Posterior cingulate gyrus (tissue), 11 donors: ENCODE measurements at regions of chr2 and their contacts with region 1.

Region 1: GRCh38 chr2:218995972-218996711 is 2.9 kb upstream of the CRYBA2 start:
- DNase-seq: peak; percentile 68 to 97 (median 88)

Region 2: DNA sequence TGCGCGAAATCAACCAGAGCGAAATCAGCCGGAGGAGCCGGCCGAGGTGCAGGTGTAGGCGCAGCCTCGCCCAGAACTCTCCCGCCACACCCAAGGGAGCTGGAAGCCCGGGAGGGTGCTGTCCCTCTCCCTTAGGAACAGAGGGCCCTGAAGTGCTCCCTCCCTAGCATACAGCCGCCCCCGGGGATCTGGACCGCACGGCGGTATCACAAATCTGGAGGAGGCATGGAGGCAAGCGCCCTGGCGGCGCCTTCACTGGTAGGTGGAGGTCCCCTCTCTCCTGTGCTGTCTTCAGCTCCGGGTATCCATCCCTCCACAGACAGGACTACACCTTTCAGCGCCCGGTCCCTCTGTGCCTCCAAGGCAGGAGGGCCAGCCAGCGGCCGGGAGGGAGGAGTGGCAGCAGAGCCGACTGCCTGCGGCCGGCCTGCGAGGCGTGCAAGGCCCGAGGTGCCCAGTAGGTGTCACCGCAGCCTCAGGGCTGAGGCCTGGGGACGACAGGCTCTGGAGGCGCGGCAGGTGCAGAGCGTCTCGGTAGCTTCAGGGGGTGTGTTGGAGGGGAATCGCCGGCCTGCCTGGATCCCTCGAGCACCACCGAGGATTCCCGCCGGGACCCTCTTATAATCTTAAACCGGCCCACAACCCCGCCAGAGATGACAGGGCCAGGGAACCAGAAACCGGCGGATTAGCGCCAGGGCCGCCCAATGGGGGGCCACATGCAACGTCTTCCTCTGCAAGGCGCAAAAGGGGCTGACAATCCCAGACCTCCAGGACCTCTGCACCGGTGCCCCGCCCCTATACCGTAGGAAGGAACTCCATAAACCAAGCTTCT is 61.8 kb after region 1 on chr2:
- intact Hi-C with region 1: loop called (anchors 10 kb)
- DNase-seq: peak; percentile 74 to 97 (median 79)

Region 3: DNA sequence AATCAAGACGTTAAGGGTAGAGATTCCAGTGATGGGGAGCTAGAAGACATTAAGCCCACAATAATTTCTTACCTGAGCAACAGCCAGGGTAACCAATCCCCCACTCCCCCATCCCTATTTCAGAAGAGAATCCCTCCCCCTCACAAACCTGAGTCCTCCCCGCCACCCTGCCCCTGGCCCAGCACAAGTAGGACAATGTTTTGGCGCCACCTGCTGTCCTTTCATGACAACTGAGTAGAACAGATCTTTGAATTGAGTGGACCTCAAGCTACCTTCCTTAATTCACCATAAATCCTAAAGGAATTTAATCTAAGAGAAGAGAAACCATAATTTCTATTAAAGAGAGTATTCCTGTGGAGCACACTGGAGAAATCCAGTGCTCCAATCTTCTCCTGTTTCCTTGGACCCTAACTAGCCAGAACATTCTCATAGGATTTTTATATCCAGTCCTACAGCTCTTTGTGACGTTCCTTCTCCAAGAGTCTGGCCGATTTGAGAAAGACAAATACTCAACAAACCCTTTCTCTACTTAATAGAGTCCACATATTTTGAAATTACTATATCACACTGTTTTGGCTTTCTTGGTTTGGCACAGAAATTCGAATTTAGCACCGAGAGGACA is 123.4 kb after region 1 on chr2:
- intact Hi-C with region 1: loop called (anchors 1 kb)
- DNase-seq: peak; percentile 18 to 93 (median 74)

Region 4: DNA sequence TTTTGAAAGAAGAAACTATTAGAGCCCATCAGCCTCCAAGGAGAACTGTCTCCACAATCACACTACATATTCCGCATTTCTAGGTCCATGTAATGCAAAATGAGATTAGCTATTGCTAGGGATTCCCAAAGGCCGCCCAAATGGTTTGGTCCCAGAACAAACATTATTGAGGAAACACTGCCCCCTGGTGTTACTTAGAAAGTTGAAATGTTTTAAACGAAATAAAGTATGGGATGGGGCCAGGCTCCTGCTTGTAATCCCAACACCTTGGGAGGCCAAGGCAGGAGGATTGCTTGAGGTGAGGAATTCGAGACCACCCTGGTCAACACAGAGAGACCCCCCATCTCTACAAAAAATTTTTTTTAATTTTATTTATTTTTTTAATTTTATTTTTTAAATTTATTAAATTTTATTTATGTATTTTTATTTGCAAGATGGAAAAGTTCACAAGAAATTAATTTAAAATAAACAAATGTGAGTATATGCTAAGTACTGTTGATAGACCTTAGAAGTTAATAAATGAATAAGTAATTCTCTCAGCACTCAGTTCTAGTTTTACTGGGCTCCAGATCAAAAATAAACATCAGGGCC is 159.0 kb after region 1 on chr2:
- intact Hi-C with region 1: loop called (anchors 1 kb)
- DNase-seq: peak in 2 of 10 donors; percentile 5 to 28